ENCODE measurements at regions of chr7 and their contacts with region 1.

Region 1: GRCh38 chr7:64307254-64308015 is 6.3 kb upstream of the ZNF736 start:
- DNase-seq: peak; percentile 91 to 97 (median 94)
- H3K4me3 ChIP-seq: peak overlapping the region; percentile 95 to 97
- H3K4me3 Mint-ChIP-seq: peak overlapping the region; percentile 92 to 100 (median 96)
- H3K27ac ChIP-seq: peak overlapping the region; percentile 71
- H3K27ac Mint-ChIP-seq: peak overlapping the region; percentile 94 to 99 (median 97)
- H3K4me1 ChIP-seq: peaks cover 13% of the 10 kb centered on the region
- H3K4me1 Mint-ChIP-seq: peaks cover 10 to 29% (median 16%) of the 10 kb centered on the region in 4 donors
- H3K27me3 ChIP-seq: no peaks in the 10 kb centered on the region
- H3K27me3 Mint-ChIP-seq: no peaks in the 10 kb centered on the region

Region 2: DNA sequence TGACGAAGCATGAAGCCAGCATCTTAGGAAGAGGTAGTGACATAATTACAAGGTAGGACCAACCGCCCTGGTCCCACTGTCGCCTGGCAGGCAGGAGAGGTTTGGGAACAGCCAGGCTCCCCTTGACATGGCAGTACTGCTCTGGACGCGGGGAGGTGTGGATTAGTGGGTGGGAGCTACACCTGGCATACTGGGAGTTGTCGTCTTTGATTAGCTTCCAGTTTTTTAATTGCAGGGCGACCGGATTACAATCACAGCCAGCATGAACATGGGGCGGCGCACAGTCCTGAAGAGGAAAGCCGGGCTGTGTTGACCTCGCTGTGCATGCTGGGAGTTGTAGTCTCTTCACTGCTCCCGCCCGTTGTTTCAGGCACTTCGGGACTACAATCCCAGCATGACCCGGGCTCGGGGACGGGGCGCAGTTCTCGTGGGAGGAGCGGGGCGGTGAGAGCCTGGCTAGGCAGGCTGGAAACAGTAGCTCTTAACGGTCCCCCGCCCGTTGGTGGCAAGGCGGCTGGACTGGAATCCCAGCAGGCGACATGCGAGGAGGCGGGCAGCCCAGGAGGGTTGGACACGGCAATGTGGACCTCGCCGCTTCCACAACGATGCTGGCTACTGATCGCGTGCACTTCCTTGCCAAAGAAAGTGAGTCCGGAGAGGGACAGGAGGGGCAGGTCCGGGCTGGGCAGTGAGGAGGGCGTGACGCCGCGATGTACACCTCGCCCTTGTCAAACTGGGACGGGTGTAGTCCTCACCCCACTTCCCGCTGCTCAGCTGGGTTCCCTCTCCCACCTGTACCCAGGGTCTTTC is 406.8 kb before region 1 on chr7:
- CTCF ChIA-PET with region 1: no interaction called
- POLR2A ChIA-PET with region 1: interaction called, 15 read pairs
- intact Hi-C with region 1: no loop called
- DNase-seq: peak; percentile 79 to 94 (median 92)
- H3K4me3 ChIP-seq: peak overlapping the region; percentile 41 to 61
- H3K4me3 Mint-ChIP-seq: peak overlapping the region; percentile 93 to 99 (median 96)
- H3K27ac ChIP-seq: peak overlapping the region; percentile 68
- H3K27ac Mint-ChIP-seq: peak overlapping the region; percentile 82 to 99 (median 98)
- H3K4me1 ChIP-seq: no peaks in the 10 kb centered on the region
- H3K4me1 Mint-ChIP-seq: peaks cover 0 to 20% (median 6%) of the 10 kb centered on the region in 4 donors
- H3K27me3 ChIP-seq: no peaks in the 10 kb centered on the region
- H3K27me3 Mint-ChIP-seq: no peaks in the 10 kb centered on the region

Region 3: GRCh38 chr7:64562626-64563275 is 255.3 kb after region 1 on chr7 and contains the start of gene ZNF680:
- CTCF ChIA-PET with region 1: no interaction called
- POLR2A ChIA-PET with region 1: interaction called, 24 read pairs
- intact Hi-C with region 1: loop called (anchors 1 kb)
- DNase-seq: peak; percentile 89 to 93 (median 90)
- H3K4me3 ChIP-seq: peak within 1 kb of the TSS; percentile 47 to 70
- H3K4me3 Mint-ChIP-seq: peak within 1 kb of the TSS; percentile 100
- H3K27ac ChIP-seq: peak within 1 kb of the TSS; percentile 57
- H3K27ac Mint-ChIP-seq: peak within 1 kb of the TSS; percentile 97 to 99 (median 99)
- H3K4me1 ChIP-seq: peaks cover 20% of the 10 kb centered on the region
- H3K4me1 Mint-ChIP-seq: peaks cover 21 to 46% (median 36%) of the 10 kb centered on the region in 4 donors
- H3K27me3 ChIP-seq: no peaks in the 10 kb centered on the region
- H3K27me3 Mint-ChIP-seq: no peaks in the 10 kb centered on the region
- total RNA-seq, gene ZNF680: 17.7 to 19.6 TPM

Region 4: DNA sequence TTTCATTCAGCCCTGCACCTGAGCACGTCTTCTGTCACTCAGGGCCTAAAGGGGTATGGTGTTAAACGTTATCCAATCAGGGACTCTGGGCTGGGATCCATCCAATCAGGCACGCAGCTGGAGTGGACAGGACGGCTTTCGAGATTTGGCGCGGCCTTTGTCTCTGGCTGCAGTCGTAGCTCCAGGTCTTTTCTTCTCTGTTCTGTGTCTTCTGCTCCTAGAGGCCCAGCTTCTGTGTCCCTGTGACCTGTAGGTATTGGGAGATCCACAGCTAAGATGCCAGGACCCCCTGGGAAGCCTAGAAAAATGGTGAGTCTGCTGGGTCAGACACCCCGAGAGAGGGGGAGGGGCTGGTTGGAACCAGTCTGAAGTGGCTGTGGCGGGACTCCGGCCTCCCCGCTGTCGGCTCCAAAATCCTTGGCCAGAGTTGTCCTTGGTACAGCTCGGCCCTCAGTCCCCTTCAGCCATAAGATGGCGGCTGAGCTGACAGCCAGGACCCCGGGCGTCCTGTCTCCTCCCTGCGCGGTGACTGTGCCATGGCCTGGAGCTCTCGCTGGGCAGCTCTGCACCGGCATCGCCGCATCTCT is 267.2 kb after region 1 on chr7:
- CTCF ChIA-PET with region 1: no interaction called
- POLR2A ChIA-PET with region 1: no interaction called
- intact Hi-C with region 1: no loop called
- DNase-seq: no peak
- H3K4me3 ChIP-seq: no peak overlapping the region
- H3K4me3 Mint-ChIP-seq: no peak overlapping the region
- H3K27ac ChIP-seq: no peak overlapping the region
- H3K27ac Mint-ChIP-seq: no peak overlapping the region
- H3K4me1 ChIP-seq: no peaks in the 10 kb centered on the region
- H3K4me1 Mint-ChIP-seq: peaks cover 3 to 7% (median 5%) of the 10 kb centered on the region in 4 donors
- H3K27me3 ChIP-seq: no peaks in the 10 kb centered on the region
- H3K27me3 Mint-ChIP-seq: peaks cover 2 to 5% of the 10 kb centered on the region in 2 donors

Region 5: DNA sequence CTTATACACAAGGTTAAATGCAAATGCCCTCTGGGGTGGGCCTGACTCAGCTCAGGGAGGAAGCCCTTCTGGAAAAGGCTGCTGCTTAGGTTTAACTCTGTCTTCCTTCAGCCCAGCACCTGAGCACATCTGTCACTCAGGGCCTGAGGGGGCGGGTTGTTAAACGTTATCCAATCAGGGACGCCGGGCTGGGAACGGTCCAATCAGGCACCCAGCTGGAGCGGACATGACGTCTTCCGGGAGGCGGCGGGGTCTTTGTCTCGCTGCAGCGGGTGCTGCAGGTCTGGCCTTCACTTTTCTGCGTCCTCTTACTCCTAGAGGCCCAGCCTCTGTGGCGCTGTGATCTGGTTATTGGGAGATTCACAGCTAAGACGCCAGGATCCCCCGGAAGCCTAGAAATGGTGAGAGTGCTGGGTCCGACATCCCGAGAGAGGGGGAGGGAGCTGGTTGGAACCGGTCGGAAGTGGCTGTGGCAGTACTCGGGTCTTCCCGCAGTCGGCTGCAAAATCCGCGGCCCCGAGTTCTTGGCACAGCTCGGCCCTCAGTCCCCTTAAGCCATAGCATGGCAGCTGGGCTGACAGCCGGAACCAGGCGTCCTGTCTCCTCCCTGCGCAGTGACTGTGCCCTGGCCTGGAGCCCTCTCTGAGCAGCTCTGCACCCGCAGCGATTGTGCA is 486.9 kb after region 1 on chr7 and contains the start of gene ZNF138:
- CTCF ChIA-PET with region 1: no interaction called
- POLR2A ChIA-PET with region 1: interaction called, 11 read pairs
- intact Hi-C with region 1: loop called (anchors 1 kb)
- DNase-seq: peak; percentile 92 to 95 (median 93)
- H3K4me3 ChIP-seq: peak within 1 kb of the TSS; percentile 87 to 95
- H3K4me3 Mint-ChIP-seq: peak within 1 kb of the TSS; percentile 97 to 99 (median 99)
- H3K27ac ChIP-seq: peak within 1 kb of the TSS; percentile 75
- H3K27ac Mint-ChIP-seq: peak within 1 kb of the TSS; percentile 97 to 99 (median 98)
- H3K4me1 ChIP-seq: peaks cover 27% of the 10 kb centered on the region
- H3K4me1 Mint-ChIP-seq: peaks cover 18 to 47% (median 30%) of the 10 kb centered on the region in 4 donors
- H3K27me3 ChIP-seq: no peaks in the 10 kb centered on the region
- H3K27me3 Mint-ChIP-seq: no peaks in the 10 kb centered on the region
- total RNA-seq, gene ZNF138: 12.1 to 14.3 TPM

Region 6: DNA sequence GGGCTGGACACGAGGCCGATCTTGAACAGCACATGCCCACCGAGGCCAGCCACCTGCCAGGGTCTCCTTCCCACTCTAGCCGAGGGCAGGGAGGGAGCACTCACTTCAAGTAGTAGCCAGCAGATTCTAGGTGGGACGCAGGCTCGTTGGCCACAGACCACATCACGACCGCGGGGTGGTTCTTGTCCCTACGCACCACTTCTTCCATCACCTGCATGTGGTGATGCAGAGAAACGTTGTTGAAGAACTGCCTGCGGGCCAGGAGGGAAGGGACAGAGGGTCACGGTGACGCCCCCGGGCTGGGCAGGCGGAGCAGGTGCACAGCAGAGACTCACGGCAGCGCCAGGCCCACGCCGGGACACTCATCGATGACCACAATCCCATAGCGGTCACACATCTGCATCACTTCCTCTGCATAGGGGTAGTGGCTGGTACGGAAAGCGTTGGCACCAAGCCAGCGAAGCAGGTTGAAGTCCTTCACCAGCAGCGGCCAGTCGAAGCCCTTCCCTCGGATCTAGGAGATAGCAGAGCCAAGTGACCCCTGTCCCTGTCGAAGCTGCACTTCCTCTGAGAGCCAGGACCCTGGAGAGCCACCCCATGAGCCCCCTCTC is 1666.9 kb after region 1 on chr7:
- CTCF ChIA-PET with region 1: no interaction called
- POLR2A ChIA-PET with region 1: no interaction called
- intact Hi-C with region 1: loop called (anchors 10 kb)
- DNase-seq: no peak
- H3K4me3 ChIP-seq: no peak overlapping the region
- H3K4me3 Mint-ChIP-seq: no peak overlapping the region
- H3K27ac ChIP-seq: no peak overlapping the region
- H3K27ac Mint-ChIP-seq: no peak overlapping the region
- H3K4me1 ChIP-seq: no peaks in the 10 kb centered on the region
- H3K4me1 Mint-ChIP-seq: peaks cover 0 to 7% (median under 1%) of the 10 kb centered on the region in 4 donors
- H3K27me3 ChIP-seq: no peaks in the 10 kb centered on the region
- H3K27me3 Mint-ChIP-seq: no peaks in the 10 kb centered on the region